GM13976 (cell line): ENCODE measurements at regions of chr9 and their contacts with region 1.

Region 1: DNA sequence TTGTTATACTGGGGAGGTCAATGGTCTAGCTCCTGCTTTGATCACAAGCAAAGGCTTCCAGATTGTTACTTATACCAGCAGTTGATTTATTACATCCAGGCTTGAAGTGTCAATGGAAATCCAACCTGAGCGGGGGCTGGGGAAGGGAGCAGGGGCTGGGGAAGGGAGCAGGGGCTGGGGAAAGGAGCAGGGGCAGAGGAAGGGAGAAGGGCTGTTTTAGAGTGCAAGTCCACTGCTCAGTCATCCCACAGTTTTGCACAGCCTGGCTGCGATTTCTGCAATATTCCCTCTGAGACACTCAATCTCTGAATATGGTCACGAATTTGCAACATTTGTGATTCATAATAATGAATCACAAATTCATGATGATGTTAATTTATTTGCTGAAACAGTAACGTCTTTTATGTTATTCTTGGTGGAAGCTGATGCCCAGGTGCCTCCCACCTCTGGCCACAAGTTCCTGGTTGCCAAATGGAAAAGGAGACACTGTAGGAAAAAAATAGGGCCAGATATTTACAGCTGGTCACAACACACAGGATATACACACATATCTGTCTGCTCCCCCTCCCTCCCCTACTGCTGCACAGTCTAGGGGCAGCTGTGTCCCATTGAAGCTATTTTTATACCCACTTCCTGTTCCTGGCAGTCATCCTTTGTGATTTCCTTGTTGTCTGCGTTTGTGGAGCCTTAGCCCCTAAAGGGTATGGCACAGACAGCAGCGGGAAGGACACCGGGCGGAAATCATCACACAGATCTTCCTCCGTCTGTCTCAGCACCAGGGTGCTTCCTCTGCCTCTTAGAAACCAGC is 325.1 kb downstream of the GADD45G start:
- DNase-seq: no peak
- CTCF ChIP-seq: no peak

Region 2: DNA sequence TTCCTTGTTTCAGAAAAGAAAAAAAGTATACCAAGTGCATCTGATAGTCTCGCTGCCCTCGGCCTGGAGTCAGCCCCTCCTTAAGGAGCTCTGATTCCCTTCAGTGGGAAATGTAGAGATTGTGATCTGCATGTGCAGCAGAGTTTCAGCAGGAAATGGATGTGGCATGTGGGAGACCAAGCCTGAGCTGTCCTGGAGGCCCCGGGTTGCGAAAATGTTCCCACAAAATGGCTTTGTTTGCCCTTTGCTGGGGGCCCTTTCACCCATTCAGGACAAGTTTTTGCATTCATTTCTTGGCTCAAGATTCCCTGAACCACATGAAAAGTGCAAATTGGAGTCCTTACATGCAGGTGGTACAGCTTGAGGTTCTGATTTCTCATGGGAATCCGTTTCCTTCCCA is 94.2 kb before region 1 on chr9:
- in situ Hi-C with region 1: no loop called
- DNase-seq: no peak
- CTCF ChIP-seq: no peak

Region 3: GRCh38 chr9:89863837-89864236 is 66.0 kb before region 1 on chr9:
- in situ Hi-C with region 1: loop called (anchors 10 kb)
- DNase-seq: no peak
- CTCF ChIP-seq: no peak

Region 4: GRCh38 chr9:89993678-89994630 is 64.1 kb after region 1 on chr9:
- in situ Hi-C with region 1: no loop called
- DNase-seq: no peak
- CTCF ChIP-seq: no peak

Region 5: GRCh38 chr9:90012949-90013348 is 83.1 kb after region 1 on chr9:
- in situ Hi-C with region 1: no loop called
- DNase-seq: no peak
- CTCF ChIP-seq: no peak